ENCODE measurements at regions of chr3 and their contacts with region 1.

Region 1: DNA sequence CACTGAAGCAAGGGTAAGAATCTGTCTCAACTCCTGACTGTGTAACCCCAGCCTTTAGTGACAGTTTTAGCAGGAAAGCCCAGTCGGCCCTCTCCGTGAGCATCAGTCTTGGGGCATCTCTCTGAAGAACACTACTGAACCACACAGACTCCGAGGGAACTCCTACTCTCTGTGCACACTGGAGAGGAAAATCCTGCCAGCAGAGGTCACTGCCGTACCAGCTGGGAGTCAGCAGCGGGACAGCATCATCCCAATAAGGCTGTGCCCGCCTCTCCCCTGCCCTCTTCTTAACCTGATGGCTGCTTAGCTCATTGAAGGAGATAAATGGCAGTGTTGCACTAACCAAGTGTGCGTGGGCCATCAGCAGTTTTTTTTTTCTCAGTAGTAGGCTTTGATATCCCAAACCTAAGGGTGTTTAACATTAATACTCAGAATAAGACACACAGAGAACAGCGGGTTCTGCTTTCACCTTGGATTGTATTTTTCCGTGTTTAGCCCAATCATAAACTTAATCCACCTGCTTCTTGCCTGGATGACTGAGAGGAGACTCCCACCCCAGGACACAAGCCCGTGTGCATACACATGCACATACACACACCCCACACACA is 26.6 kb upstream of the RASA2 start:
- DNase-seq: peak; percentile 83 to 93 (median 88)
- ATAC-seq: peak; percentile 100
- H3K4me3 ChIP-seq: no peak overlapping the region
- H3K4me3 Mint-ChIP-seq: no peak overlapping the region
- H3K27ac ChIP-seq: no peak overlapping the region
- H3K27ac Mint-ChIP-seq: no peak overlapping the region
- H3K4me1 ChIP-seq: peaks cover 7% of the 10 kb centered on the region
- H3K4me1 Mint-ChIP-seq: peaks cover 7% of the 10 kb centered on the region
- H3K27me3 ChIP-seq: no peaks in the 10 kb centered on the region
- H3K27me3 Mint-ChIP-seq: no peaks in the 10 kb centered on the region
- CTCF ChIP-seq: peak; percentile 93

Region 2: DNA sequence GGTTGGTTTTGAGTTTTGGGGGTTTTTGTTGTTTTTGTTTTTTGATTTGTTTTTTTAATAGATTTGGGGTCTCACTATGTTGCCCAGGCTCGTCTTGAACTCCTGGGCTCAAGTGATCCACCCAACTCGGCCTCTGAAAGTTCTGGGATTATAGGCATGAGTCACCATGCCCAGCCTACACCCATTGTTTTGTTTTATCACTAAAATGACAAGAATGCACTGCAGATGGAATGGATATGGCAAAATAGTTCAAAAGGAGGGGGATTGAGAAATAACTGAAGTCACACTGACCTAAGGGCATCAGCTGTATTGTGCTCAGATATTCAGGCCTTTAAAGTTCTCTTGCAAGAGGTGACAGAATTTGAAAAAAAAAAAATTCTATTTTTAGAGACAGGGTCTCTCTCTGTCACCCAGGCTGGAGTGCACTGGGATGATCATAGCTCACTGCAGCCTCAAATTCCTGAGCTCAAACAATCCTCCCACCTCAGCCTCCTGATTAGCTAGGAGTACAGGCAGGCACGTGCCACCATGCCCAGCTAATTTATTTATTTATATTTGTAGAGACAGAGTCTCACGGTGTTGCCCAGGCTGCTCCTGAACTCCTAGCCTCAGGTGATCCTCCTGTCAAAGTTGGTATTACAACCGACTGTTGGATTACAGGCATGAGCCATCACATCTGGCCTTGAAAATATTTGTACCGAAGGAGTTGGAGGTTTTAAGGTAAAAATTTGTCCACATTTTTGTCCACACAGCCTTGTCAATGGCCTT is 22.2 kb after region 1 on chr3:
- CTCF ChIA-PET with region 1: interaction called, 11 read pairs
- POLR2A ChIA-PET with region 1: interaction called, 9 read pairs
- intact Hi-C with region 1: no loop called
- DNase-seq: no peak
- ATAC-seq: no peak
- H3K4me3 ChIP-seq: no peak overlapping the region
- H3K4me3 Mint-ChIP-seq: no peak overlapping the region
- H3K27ac ChIP-seq: no peak overlapping the region
- H3K27ac Mint-ChIP-seq: no peak overlapping the region
- H3K4me1 ChIP-seq: peaks cover 15% of the 10 kb centered on the region
- H3K4me1 Mint-ChIP-seq: peaks cover 38% of the 10 kb centered on the region
- H3K27me3 ChIP-seq: no peaks in the 10 kb centered on the region
- H3K27me3 Mint-ChIP-seq: no peaks in the 10 kb centered on the region
- CTCF ChIP-seq: no peak

Region 3: DNA sequence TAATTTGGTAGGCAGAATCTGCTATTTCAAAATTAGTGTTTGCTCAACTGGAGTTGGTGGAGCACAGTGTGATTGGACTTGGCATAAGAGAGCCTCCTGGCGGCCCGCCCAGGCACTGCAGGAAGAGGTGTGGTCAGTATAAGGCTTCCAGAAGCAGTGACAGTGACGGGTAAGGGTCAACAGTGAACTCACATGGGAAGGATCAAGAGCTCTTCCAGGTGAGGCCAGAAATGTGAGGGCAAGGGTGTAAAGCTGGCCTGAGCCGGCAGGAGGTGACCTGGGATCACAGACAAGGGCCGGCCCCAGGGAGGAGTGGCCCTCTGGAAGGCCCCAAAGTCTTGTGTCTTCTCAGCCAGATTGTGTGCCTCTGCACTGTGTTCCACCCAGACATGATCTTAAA is 184.7 kb after region 1 on chr3:
- CTCF ChIA-PET with region 1: no interaction called
- POLR2A ChIA-PET with region 1: no interaction called
- intact Hi-C with region 1: loop called in 1 of 2 experiments (anchors 1 kb)
- DNase-seq: peak; percentile 36 to 75 (median 58)
- ATAC-seq: peak; percentile 59
- H3K4me3 ChIP-seq: no peak overlapping the region
- H3K4me3 Mint-ChIP-seq: no peak overlapping the region
- H3K27ac ChIP-seq: no peak overlapping the region
- H3K27ac Mint-ChIP-seq: no peak overlapping the region
- H3K4me1 ChIP-seq: peaks cover 3% of the 10 kb centered on the region
- H3K4me1 Mint-ChIP-seq: no peaks in the 10 kb centered on the region
- H3K27me3 ChIP-seq: no peaks in the 10 kb centered on the region
- H3K27me3 Mint-ChIP-seq: no peaks in the 10 kb centered on the region
- CTCF ChIP-seq: peak; percentile 76

Region 4: GRCh38 chr3:141828487-141829268 is 368.5 kb after region 1 on chr3:
- CTCF ChIA-PET with region 1: no interaction called
- POLR2A ChIA-PET with region 1: no interaction called
- intact Hi-C with region 1: no loop called
- DNase-seq: no peak
- ATAC-seq: no peak
- H3K4me3 ChIP-seq: no peak overlapping the region
- H3K4me3 Mint-ChIP-seq: no peak overlapping the region
- H3K27ac ChIP-seq: no peak overlapping the region
- H3K27ac Mint-ChIP-seq: no peak overlapping the region
- H3K4me1 ChIP-seq: no peaks in the 10 kb centered on the region
- H3K4me1 Mint-ChIP-seq: no peaks in the 10 kb centered on the region
- H3K27me3 ChIP-seq: no peaks in the 10 kb centered on the region
- H3K27me3 Mint-ChIP-seq: no peaks in the 10 kb centered on the region
- CTCF ChIP-seq: no peak

Region 5: GRCh38 chr3:141998669-141999290 is 538.6 kb after region 1 on chr3:
- CTCF ChIA-PET with region 1: no interaction called
- POLR2A ChIA-PET with region 1: no interaction called
- intact Hi-C with region 1: loop called in 1 of 2 experiments (anchors 2 kb)
- DNase-seq: peak in 3 of 14 experiments; percentile 14 to 25 (median 21)
- ATAC-seq: no peak
- H3K4me3 ChIP-seq: no peak overlapping the region
- H3K4me3 Mint-ChIP-seq: no peak overlapping the region
- H3K27ac ChIP-seq: no peak overlapping the region
- H3K27ac Mint-ChIP-seq: no peak overlapping the region
- H3K4me1 ChIP-seq: no peaks in the 10 kb centered on the region
- H3K4me1 Mint-ChIP-seq: no peaks in the 10 kb centered on the region
- H3K27me3 ChIP-seq: no peaks in the 10 kb centered on the region
- H3K27me3 Mint-ChIP-seq: no peaks in the 10 kb centered on the region
- CTCF ChIP-seq: peak; percentile 3